Activated CD4-positive, alpha-beta T cell treated with anti-CD3 and anti-CD28 coated beads, Interleukin-2, amount 10 ng/mL, durations not matched to agents 24 days and 14 days (primary cell): ENCODE measurements at regions of chr19 and their contacts with region 1.

Region 1: GRCh38 chr19:57914531-57914930 is 1.9 kb downstream of the ZNF417 start:
- DNase-seq: no peak
- H3K4me3 Mint-ChIP-seq: no peak overlapping the region
- H3K27ac Mint-ChIP-seq: no peak overlapping the region
- H3K4me1 Mint-ChIP-seq: peaks cover 15% of the 10 kb centered on the region
- H3K27me3 Mint-ChIP-seq: no peaks in the 10 kb centered on the region

Region 2: DNA sequence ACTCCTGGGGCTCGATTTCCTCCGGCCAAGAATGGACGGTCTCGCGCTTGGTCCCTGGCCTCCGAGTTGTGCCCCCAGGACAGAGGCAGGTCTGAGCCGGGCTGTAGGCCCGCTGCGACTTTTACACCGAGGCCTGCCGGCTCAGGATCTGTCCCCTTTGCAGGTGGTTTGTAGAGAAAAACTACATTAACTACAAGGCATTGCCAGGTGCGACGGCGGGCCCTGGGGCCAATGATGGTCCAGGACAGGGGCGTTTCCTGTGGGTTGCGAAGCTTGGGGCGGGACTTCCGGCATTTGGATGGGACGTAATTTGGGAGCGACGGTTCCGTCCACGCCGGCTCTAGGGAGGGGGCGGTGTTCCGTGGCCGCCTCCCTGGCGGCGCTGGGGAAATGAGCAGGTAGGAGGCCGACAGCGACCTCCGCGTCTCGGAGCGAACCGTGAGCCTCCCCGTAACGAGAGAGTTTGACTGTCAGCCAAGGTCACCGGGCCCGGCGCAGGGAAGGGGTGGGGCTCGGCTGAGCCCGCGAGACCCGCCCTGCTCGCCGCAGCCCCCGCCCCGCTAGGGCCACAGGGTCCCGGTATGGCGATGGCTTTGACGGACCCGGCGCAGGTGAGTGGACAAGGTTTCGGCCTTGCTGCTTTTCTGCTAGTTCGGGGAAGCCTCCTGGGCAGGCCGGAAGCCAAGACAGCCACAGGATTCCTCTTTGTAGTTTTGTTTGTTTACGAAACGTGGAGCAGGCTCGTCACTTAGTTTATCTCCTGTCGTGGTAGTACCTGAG is 674.0 kb before region 1 on chr19 and contains the start of gene ZNF805:
- intact Hi-C with region 1: loop called (anchors 1 kb)
- DNase-seq: peak; percentile 98
- H3K4me3 Mint-ChIP-seq: peak within 1 kb of the TSS; percentile 87
- H3K27ac Mint-ChIP-seq: peak within 1 kb of the TSS; percentile 95
- H3K4me1 Mint-ChIP-seq: peaks cover 21% of the 10 kb centered on the region
- H3K27me3 Mint-ChIP-seq: peaks cover 2% of the 10 kb centered on the region
- total RNA-seq, gene ZNF805: 7.6 and 8.6 TPM in 2 replicates

Region 3: DNA sequence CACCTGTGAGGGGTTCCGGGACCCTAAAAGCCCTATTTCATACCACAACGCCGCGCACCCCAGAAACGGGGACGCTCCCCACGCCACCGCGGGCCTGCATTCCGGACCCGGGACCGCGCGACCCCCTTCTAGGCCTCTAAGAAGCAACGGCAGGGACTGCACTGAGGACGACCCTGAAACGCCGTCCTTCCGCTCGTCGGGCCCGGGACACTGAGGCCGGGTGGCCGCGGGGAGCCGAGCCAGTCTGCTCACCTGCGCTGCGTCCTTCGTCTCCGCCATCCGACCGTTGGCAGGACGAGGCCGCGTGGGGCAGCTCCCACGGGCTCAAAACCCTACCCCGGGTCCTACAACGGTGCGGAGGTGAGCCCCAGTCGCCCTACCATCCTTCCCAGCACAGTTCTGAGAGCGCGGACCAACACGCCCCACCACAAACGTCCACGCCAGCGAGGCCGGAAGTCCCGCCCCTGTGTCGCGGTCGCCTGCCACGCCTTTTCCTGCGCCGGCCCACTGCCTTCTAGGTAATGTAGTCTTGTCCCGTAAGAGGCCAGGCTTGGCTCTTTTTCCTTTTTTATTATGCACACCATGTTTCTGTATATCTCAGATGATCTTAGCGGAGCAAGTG is 355.0 kb before region 1 on chr19 and contains the start of gene ZNF550:
- intact Hi-C with region 1: loop called (anchors 1 kb)
- DNase-seq: peak; percentile 96
- H3K4me3 Mint-ChIP-seq: peak within 1 kb of the TSS; percentile 99
- H3K27ac Mint-ChIP-seq: peak within 1 kb of the TSS; percentile 94
- H3K4me1 Mint-ChIP-seq: peaks cover 23% of the 10 kb centered on the region
- H3K27me3 Mint-ChIP-seq: no peaks in the 10 kb centered on the region
- total RNA-seq, gene ZNF550: 7.4 and 9.3 TPM in 2 replicates

Region 4: GRCh38 chr19:57578487-57579205 is 335.9 kb before region 1 on chr19 and contains the start of gene ZNF416:
- intact Hi-C with region 1: loop called (anchors 1 kb)
- DNase-seq: peak; percentile 98
- H3K4me3 Mint-ChIP-seq: peak within 1 kb of the TSS; percentile 84
- H3K27ac Mint-ChIP-seq: peak within 1 kb of the TSS; percentile 73
- H3K4me1 Mint-ChIP-seq: peaks cover 19% of the 10 kb centered on the region
- H3K27me3 Mint-ChIP-seq: no peaks in the 10 kb centered on the region
- total RNA-seq, gene ZNF416: 3.4 and 3.5 TPM in 2 replicates

Region 5: GRCh38 chr19:57746580-57747471 is 167.7 kb before region 1 on chr19 and contains the start of gene ZNF776:
- intact Hi-C with region 1: loop called (anchors 5 kb)
- DNase-seq: peak; percentile 95
- H3K4me3 Mint-ChIP-seq: peak within 1 kb of the TSS; percentile 96
- H3K27ac Mint-ChIP-seq: peak within 1 kb of the TSS; percentile 97
- H3K4me1 Mint-ChIP-seq: peaks cover 16% of the 10 kb centered on the region
- H3K27me3 Mint-ChIP-seq: no peaks in the 10 kb centered on the region
- total RNA-seq, gene ZNF776: 7.5 and 7.9 TPM in 2 replicates

Region 6: DNA sequence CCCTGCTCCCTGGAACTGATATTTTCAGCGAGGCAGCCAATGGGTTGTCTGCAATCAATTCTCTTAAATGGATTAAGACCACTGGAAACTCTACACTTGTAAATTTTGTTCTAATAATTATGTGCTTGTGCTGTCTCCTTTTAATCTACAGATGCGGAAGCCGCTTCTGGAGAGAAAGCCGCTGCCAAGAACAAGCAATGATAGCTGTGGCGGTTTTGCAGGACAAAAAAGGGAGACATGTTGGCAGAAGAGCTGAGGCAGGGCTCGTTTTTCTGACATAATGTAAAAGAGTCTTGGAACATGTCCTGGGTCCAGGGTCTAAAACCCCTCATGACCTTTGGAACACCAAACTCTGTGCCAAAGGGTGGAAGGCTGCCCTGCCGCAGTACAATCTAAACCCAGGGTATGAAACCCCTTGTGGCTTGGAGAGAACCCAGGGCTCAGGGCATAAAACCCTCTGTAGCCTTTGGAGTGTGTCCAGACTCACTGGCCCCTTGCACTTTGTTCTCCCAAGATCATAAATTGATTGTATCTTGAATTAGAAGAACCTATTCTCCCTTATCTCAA is 10.8 kb before region 1 on chr19:
- intact Hi-C with region 1: no loop called
- DNase-seq: no peak
- H3K4me3 Mint-ChIP-seq: no peak overlapping the region
- H3K27ac Mint-ChIP-seq: no peak overlapping the region
- H3K4me1 Mint-ChIP-seq: peaks cover 1% of the 10 kb centered on the region
- H3K27me3 Mint-ChIP-seq: no peaks in the 10 kb centered on the region

Region 7: DNA sequence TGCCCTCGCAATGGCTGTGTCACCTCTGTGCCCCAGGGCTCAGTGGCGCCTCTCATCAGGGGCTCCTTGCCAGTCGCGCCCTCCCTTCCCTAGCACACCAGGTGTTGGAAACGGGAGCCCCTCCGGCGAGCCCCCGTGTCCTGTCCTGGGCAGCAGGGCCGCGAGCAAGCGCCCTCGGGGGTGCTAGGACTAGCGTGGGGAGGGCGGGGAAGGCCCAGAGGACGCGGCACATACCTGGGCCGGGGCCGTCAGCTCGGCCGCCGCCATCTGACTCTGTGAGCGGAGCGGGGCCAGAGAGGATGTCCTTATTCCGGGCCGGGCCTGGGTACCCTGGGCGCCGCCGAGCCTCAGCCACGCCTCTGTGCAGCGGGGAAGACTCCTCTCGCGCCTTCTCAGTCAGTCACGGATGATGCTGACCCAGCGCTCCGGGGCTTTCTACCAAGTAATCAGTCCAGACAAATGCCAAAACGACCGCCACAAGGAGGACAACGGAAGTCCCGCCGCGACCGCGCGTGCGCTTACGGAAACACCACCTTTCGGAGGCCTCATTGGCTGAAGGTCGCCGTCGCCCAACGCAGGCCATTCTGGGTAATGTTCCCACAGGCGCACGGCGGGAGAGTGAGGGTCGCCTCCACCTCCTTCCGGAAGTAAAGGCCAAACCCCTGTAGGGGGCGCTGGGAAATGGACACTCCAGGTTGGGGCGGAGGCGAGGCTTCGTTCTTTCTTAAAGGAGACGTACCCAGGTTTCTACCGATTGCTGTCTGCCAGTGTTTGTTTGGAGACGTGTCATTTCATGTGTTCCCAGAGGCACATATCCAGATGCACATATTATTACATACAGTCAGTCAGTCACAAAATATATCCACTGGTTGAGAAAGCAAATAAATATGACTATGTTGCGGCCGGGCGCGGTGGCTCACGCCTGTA is 32.9 kb after region 1 on chr19 and contains the start of gene ZNF256:
- intact Hi-C with region 1: loop called (anchors 1 kb)
- DNase-seq: peak; percentile 94
- H3K4me3 Mint-ChIP-seq: peak within 1 kb of the TSS; percentile 96
- H3K27ac Mint-ChIP-seq: peak within 1 kb of the TSS; percentile 90
- H3K4me1 Mint-ChIP-seq: peaks cover 11% of the 10 kb centered on the region
- H3K27me3 Mint-ChIP-seq: no peaks in the 10 kb centered on the region
- total RNA-seq, gene ZNF256: 3.2 and 3.9 TPM in 2 replicates

Region 8: GRCh38 chr19:58002384-58003173 is 88.0 kb after region 1 on chr19 and contains the start of gene ZNF606:
- intact Hi-C with region 1: loop called (anchors 2 kb)
- DNase-seq: peak; percentile 95
- H3K4me3 Mint-ChIP-seq: peak within 1 kb of the TSS; percentile 84
- H3K27ac Mint-ChIP-seq: peak within 1 kb of the TSS; percentile 88
- H3K4me1 Mint-ChIP-seq: peaks cover 11% of the 10 kb centered on the region
- H3K27me3 Mint-ChIP-seq: no peaks in the 10 kb centered on the region
- total RNA-seq, gene ZNF606: 6.6 and 7.0 TPM in 2 replicates